ENCODE measurements at regions of chr5 and their contacts with region 1.

Region 1: GRCh38 chr5:115634343-115635132 is 8.7 kb upstream of the TMED7 start:
- DNase-seq: peak; percentile 78
- H3K4me3 ChIP-seq: peak overlapping the region; percentile 7 to 45; a peak in 1 of 4 replicates
- H3K27ac ChIP-seq: no peak overlapping the region
- H3K4me1 ChIP-seq: no peaks in the 10 kb centered on the region; a peak in 1 of 4 replicates
- H3K27me3 ChIP-seq: no peaks in the 10 kb centered on the region
- CTCF ChIP-seq: peak; percentile 93
- EP300 ChIP-seq: no peak
- RAD21 ChIP-seq: peak; percentile 95

Region 2: GRCh38 chr5:115160975-115161475 is 473.5 kb before region 1 on chr5:
- CTCF ChIA-PET with region 1: no interaction called
- POLR2A ChIA-PET with region 1: no interaction called
- DNase-seq: no peak
- H3K4me3 ChIP-seq: no peak overlapping the region
- H3K27ac ChIP-seq: no peak overlapping the region
- H3K4me1 ChIP-seq: no peaks in the 10 kb centered on the region
- H3K27me3 ChIP-seq: no peaks in the 10 kb centered on the region
- CTCF ChIP-seq: no peak
- EP300 ChIP-seq: no peak
- RAD21 ChIP-seq: no peak

Region 3: DNA sequence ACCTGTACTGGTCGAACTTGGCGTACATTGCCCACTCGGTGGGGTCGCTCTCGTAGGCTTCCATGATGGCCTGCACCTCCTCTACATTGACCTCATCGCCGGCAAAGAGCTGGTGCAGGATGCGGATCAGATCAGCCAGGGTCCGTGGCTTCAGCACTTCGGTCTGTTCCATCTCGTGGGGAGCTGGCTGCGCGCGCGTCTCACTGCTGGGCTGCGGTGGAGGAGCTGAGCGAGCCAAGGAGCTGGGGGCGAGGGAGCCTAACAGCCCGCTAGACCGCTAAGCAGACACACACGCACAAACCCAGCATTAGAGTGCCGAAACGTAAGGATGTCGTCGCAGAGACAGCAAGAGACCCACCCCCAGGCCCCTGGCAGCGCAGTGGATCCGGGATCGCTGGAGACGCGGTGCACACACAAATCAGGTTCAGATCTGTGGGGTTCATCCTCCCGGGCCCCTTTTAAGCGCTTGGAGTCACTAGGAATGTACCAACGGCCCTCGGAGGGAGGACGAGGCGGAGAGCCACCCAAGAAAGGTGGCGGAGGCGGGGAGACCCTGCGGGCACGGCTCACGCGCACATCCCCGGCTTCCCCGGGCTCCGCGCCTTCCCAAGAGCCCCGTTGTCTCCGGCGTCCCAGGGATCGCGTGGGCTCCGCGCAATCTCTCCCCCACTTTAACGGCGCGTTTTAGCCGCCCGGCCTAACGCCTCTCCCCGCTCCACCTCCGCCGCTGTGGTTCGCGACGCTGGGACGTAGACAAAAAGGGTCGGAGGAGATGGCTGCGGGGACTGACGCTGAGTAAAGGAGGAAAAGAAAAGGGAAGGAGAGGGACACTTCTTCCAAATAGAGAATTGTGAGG is 181.9 kb after region 1 on chr5 and contains the start of gene CDO1:
- CTCF ChIA-PET with region 1: interaction called, 11 read pairs
- POLR2A ChIA-PET with region 1: no interaction called
- DNase-seq: peak; percentile 85
- H3K4me3 ChIP-seq: peak within 1 kb of the TSS; percentile 54 to 55
- H3K27ac ChIP-seq: peak within 1 kb of the TSS in 1 of 2 experiments; percentile 69; a peak in 1 of 4 replicates
- H3K4me1 ChIP-seq: peaks cover 0 to 13% of the 10 kb centered on the region in 2 experiments; a peak in 2 of 4 replicates
- H3K27me3 ChIP-seq: peaks cover 35% of the 10 kb centered on the region
- CTCF ChIP-seq: no peak
- EP300 ChIP-seq: no peak
- RAD21 ChIP-seq: no peak
- polyA plus RNA-seq, gene CDO1: 2.9 and 3.1 TPM in 2 replicates

Region 4: DNA sequence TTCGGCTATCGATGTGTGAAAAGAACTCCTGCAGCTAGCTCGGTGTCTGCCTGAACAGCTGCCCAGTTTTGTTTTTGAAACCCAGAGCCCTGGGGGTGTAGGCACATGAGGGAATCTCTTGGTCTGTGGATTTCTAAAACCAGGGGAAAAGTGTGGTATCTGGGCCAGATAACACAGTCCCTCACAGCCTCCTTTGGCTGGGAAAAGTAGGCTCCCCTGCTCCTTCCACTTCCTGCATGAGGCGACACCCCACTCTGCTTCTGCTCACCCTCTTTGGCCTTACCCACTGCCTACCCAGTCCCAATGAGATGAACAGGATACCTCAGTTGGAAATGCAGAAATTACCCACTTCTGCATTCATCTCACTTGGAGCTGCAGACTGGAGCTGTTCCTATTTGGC is 191.4 kb after region 1 on chr5:
- CTCF ChIA-PET with region 1: interaction called, 23 read pairs
- POLR2A ChIA-PET with region 1: no interaction called
- DNase-seq: no peak
- H3K4me3 ChIP-seq: no peak overlapping the region
- H3K27ac ChIP-seq: no peak overlapping the region
- H3K4me1 ChIP-seq: no peaks in the 10 kb centered on the region
- H3K27me3 ChIP-seq: no peaks in the 10 kb centered on the region
- CTCF ChIP-seq: no peak
- EP300 ChIP-seq: no peak
- RAD21 ChIP-seq: no peak

Region 5: DNA sequence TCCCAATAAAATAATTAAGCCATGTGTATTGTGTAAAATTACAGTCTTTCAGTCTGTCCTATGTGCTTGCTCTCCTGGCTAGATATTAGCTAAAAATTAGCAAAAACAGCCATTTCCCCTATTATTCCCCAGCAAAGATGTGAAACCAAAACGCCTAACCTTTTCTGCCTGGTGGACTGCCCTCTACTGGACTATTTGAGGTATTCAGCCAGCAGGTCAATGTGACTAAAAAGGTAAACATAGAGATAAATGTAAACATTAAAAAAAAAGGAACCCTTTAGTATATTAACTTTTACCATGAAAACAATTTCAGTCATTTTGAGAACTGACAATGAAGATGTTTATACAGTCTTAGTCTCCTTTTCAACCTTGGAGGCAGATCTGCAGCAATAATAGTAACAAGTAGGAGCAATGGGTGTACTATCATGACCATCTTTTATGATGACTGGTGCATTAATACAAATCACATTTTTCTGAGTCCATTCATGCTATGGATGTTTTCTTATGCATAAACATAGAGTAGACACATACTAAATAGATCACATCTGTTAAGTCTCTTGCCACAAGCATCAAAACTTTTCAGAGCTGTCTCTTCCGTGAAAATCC is 196.7 kb after region 1 on chr5:
- CTCF ChIA-PET with region 1: interaction called, 23 read pairs
- POLR2A ChIA-PET with region 1: interaction called, 3 read pairs
- DNase-seq: peak; percentile 46
- H3K4me3 ChIP-seq: no peak overlapping the region
- H3K27ac ChIP-seq: no peak overlapping the region
- H3K4me1 ChIP-seq: no peaks in the 10 kb centered on the region
- H3K27me3 ChIP-seq: no peaks in the 10 kb centered on the region
- CTCF ChIP-seq: peak; percentile 93
- EP300 ChIP-seq: no peak
- RAD21 ChIP-seq: peak; percentile 68

Region 6: DNA sequence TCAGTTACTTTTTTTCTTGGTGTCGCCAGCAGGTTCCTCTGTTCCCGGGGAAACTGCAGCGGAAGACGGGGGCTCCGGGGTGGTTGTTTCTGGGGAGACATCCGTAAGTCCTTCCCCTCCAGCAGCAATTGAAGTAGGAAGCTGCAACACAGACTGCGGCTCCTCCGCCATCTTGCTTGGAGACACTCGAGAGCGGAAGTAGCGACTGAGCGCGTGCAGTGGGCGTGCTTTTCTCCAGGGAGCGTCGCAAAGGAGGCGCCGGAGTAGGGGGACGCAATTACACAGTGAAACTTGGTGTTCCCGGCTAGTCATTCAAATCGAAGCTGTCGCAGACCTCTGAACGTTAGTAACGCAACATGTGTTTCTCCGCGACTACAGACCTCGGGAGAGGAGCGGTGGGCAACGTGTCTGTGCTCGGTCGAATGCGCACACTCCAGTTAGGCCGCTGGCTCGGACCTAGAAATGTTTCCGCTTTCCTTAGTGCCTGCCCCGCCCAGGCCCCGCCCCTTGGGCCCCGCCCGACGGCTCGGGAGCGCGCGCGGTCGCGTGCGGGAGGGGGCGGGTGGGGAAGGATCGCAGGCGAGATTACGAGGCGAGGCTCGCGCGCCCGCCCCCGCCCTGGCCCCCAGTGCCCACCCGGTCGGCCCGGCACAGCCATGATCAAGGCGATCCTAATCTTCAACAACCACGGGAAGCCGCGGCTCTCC is 207.0 kb after region 1 on chr5 and contains the starts of genes AP3S1 and ATG12:
- CTCF ChIA-PET with region 1: interaction called, 31 read pairs
- POLR2A ChIA-PET with region 1: no interaction called
- DNase-seq: peak; percentile 93
- H3K4me3 ChIP-seq: peak within 1 kb of the TSS; percentile 87 to 89
- H3K27ac ChIP-seq: peak within 1 kb of the TSS; percentile 95 to 96
- H3K4me1 ChIP-seq: peaks cover 9 to 21% of the 10 kb centered on the region in 2 experiments; a peak in 3 of 4 replicates
- H3K27me3 ChIP-seq: no peaks in the 10 kb centered on the region
- CTCF ChIP-seq: no peak
- EP300 ChIP-seq: no peak
- RAD21 ChIP-seq: no peak
- polyA plus RNA-seq, gene AP3S1: 21.6 and 26.3 TPM in 2 replicates
- polyA plus RNA-seq, gene ATG12: 29.1 and 39.0 TPM in 2 replicates

Measured in SK-N-SH (cell line).